Uterus (tissue), 4 donors: ENCODE measurements at regions of chr5 and their contacts with region 1.

Region 1: DNA sequence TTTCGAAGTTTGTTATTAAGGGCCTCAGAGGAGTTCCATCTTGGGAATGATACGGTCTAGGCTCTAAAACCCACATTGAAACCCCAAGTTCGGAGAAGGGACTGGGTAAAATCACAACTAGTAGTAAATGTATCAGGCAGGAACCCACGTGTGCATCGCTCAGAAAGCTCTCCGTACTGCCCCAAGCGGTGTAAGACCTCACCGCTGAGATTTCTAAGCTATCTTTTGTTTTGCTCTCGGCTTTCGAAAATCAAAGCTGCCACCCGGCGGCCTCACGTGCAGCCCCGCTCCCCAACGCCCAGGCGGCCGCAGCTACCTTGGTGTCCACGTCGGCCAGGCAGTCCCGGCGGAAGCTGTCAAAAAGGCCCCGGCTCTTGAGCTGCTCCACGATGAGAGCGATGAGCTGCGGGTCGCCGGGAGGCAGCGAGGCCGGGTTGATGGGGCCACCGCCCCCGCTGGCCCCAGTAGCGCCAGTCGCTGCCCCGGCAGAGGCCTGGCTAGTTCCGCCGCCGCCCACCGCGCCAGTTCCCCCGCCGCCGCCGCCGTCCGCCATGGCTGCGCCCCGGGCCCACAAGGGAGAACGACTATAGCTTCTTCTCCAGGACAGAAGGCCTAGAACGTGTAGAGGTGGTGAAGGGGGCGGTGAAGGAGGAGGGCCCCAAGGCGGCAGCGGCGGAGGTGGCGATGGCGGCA is 420 bp downstream of the BOD1 start:
- DNase-seq: peak; percentile 32 to 50
- H3K4me3 ChIP-seq: peak overlapping the region; percentile 66 to 98
- H3K27ac ChIP-seq: peak overlapping the region; percentile 90 to 96
- H3K4me1 ChIP-seq: peaks cover 11% of the 10 kb centered on the region in 2 donors
- H3K27me3 ChIP-seq: no peaks in the 10 kb centered on the region
- CTCF ChIP-seq: peak; percentile 38 to 53 (median 46)
- POLR2A ChIP-seq: no peak

Region 2: DNA sequence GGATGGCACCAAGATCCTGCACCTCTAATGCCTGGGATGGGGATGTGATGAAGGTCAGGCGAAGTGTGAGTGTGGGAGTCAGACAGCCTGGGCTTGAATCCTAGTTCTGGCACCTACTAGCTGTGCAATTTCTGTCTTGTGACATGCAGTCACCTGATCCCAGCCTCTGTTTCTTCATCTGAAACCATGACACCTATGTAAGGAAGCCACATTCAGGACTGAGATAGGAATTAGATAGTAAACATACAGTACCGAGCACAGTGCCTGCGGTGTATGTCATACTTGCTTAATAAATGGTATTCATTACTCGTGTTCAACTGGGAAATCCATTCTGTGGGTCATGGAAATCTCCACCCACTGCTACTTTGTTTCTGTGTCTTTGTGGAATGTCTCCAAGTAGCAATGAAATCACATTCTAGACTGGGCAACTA is 147.2 kb before region 1 on chr5:
- intact Hi-C with region 1: no loop called
- DNase-seq: no peak
- H3K4me3 ChIP-seq: no peak overlapping the region
- H3K27ac ChIP-seq: no peak overlapping the region
- H3K4me1 ChIP-seq: no peaks in the 10 kb centered on the region
- H3K27me3 ChIP-seq: no peaks in the 10 kb centered on the region
- CTCF ChIP-seq: no peak
- POLR2A ChIP-seq: no peak

Region 3: DNA sequence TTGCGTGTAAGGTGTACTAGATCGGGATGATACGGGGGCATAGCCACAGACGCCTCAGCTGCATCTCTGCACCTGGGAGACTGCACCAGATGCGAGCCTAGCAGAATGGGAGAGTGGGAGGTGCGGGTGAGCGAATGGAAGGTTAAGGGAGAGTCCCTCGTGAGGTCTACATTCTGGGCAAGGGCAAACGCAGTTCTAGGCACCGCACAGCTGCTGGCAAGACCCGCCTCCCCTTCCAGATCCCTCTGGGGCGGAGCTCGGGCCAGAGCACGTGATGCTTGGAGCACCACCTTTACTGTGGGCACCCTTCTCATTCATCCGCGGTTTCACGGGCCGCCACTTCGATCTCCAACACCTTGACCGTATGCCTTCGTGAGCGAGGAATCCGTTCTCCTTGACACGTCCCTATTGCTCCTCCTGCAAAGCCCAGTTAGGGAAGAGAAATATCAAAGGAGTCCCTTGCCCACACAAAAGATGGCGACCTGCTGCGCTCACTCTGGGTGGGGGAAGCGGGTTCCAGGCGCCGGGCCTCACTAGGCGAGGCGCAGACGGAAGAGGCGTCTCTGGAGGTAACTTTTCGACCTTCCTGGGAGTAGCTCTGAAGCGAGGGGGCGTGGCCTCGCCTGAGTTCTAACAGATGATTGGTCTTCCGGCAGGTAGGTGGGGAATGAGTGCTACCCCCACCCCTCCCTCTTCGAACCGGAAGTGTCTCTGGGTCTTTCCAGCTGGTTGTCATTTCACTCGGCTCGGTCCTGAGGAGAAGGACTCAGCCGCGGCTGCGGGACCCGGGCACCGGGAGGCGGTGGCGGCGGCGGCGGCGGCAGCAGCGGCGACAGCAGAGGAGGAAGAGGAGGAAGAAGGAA is 271.8 kb after region 1 on chr5 and contains the start of gene CPEB4:
- intact Hi-C with region 1: loop called (anchors 5 kb)
- DNase-seq: peak; percentile 98 to 99
- H3K4me3 ChIP-seq: peak within 1 kb of the TSS; percentile 85 to 97
- H3K27ac ChIP-seq: peak within 1 kb of the TSS; percentile 92 to 94
- H3K4me1 ChIP-seq: no peaks in the 10 kb centered on the region
- H3K27me3 ChIP-seq: no peaks in the 10 kb centered on the region
- CTCF ChIP-seq: peak in 1 of 4 experiments; percentile 6
- POLR2A ChIP-seq: peak; percentile 92 to 98
- total RNA-seq, gene CPEB4: 7.2 to 24.1 (median 18.9) TPM